Right lobe of liver (tissue), 6 donors: ENCODE measurements at regions of chr10 and their contacts with region 1.

Region 1: GRCh38 chr10:132788180-132788830 is 2.4 kb upstream of the NKX6-2 start:
- DNase-seq: no peak
- ATAC-seq: peak in 2 of 4 donors; percentile 38 to 56
- H3K4me3 ChIP-seq: no peak overlapping the region
- H3K27ac ChIP-seq: no peak overlapping the region
- H3K4me1 ChIP-seq: peaks cover 0 to 16% (median 0%) of the 10 kb centered on the region in 4 donors
- H3K27me3 ChIP-seq: peaks cover 0 to 21% of the 10 kb centered on the region in 2 donors
- CTCF ChIP-seq: peak in 1 of 4 donors; percentile 17
- POLR2A ChIP-seq: no peak

Region 2: DNA sequence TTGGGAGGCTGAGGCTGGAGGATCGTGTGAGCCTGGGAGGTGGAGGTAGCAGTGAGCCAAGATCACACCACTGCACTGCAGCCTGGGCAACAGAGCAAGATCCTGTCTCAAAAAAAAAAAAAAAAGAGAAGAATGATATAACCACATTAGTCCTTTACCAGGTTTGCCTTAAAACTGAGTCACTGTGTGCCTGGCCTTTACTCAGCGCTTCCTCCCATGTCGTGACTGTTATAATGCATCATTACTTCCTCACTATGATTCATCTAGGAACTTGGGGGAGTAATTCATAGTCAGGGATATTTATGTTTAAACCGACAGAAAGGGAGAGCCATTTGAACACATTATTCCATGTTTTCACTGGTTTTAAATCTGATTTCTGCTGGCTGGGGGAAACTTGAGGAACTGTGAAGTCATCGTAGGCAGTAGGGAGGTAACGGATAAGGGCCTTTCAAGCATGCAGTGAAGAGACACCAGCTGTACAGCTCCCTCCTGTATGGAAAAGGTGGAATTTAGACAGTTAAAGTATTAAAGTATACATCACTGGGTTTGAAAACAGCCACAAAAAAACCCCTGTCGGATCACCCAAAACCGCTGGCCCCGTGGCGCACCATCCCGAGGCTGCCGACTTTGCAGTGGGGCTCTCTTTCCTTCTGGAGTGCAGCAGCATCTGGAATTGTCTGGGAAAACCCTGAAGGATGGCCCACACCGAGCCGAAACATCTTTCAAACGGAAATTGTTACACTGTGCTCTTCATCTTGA is 122.2 kb before region 1 on chr10:
- intact Hi-C with region 1: loop called in 1 of 2 experiments (anchors 10 kb)
- DNase-seq: no peak
- ATAC-seq: peak in 1 of 4 donors; percentile 37
- H3K4me3 ChIP-seq: no peak overlapping the region
- H3K27ac ChIP-seq: no peak overlapping the region
- H3K4me1 ChIP-seq: no peaks in the 10 kb centered on the region
- H3K27me3 ChIP-seq: no peaks in the 10 kb centered on the region
- CTCF ChIP-seq: no peak
- POLR2A ChIP-seq: no peak

Region 3: DNA sequence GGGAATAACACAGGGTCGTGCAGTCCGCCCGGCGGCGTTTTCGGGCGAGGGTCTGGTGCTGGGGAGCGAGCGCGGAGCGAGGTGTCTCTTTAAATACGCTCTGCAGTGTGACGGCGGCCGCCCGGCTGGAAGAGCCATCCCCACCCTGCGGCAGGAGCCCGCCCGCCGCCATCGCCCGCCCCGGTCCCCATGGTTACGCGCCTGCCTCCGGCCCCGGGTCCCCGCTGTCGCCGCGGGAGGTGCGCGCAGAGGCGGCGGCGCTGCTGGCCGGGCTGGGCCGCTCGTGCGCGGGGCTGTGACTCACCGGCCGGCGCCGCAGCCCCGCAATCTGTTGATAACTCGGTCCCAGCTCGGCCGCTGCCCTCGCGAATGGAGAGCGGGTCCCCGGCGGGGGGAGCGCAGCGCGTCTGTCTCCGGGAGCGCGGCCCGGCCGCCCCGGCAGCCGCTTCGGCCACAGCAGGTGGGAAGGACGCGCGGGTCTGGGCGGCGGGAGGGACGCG is 299.4 kb after region 1 on chr10 and contains the start of gene ADGRA1:
- intact Hi-C with region 1: no loop called
- DNase-seq: no peak
- ATAC-seq: peak in 3 of 4 donors; percentile 25 to 47 (median 37)
- H3K4me3 ChIP-seq: peak within 1 kb of the TSS in 2 of 3 donors; percentile 16 to 18
- H3K27ac ChIP-seq: no peak within 1 kb of the TSS
- H3K4me1 ChIP-seq: peaks cover 0 to 7% (median 0%) of the 10 kb centered on the region in 4 donors
- H3K27me3 ChIP-seq: peaks cover 0 to 5% of the 10 kb centered on the region in 2 donors
- CTCF ChIP-seq: no peak
- POLR2A ChIP-seq: no peak
- total RNA-seq, gene ADGRA1: 0.10 to 0.46 (median 0.16) TPM in 5 of 6 experiments, not detected in the other